ENCODE measurements at regions of chr3 and their contacts with region 1.

Region 1: DNA sequence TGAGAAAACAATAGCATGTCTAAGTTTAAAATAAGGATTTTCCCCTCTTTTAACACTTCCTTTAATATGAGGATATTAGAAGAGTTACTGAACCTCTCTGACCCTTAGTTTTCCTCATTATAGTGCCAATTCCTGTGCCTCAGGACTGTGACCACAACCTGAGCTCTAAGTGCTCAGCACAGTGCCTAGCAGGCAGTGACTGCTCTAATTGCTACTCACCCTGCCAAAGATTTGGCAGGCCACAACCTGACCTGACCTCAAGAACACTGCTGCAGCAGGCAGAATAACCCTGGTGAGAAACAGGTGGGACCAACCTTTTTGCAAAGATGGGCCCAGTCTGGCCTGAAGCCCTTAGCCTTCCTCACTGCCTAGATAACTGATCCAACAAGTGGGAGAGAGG is 35.7 kb downstream of the NBEAL2 start:
- DNase-seq: no peak
- ATAC-seq: no peak
- H3K4me3 ChIP-seq: no peak overlapping the region
- H3K27ac ChIP-seq: no peak overlapping the region
- H3K4me1 ChIP-seq: no peaks in the 10 kb centered on the region
- H3K27me3 ChIP-seq: no peaks in the 10 kb centered on the region
- CTCF ChIP-seq: no peak

Region 2: DNA sequence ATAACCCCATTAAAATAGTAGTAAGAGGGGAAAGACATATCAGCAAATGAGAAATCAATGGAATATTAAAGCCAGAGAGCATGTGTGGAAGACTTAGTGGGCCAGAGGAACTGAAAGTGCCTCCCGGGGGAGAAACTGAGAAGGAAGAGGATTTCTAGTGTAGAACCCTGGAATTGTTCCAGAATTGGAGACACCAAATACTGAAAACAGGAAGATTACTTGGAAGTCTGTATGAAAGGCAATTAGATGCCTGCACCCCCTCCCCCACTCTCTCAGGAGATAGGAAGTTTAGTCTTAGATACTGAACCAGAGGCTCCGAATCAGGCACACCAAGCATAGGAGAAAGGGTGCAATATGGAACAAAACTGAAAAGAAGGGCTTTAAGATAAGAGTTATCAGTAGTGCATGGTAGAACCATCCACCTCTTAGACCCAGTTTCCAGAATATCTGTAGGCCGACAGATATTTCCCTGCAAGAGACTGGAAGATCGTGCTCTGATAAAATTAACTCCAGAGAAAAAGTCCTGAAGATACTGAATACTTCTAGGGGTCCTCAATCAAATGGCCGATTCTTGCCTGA is 300.0 kb after region 1 on chr3:
- CTCF ChIA-PET with region 1: no interaction called
- POLR2A ChIA-PET with region 1: interaction called, 17 read pairs
- in situ Hi-C with region 1: no loop called
- intact Hi-C with region 1: no loop called
- DNase-seq: no peak
- ATAC-seq: no peak
- H3K4me3 ChIP-seq: no peak overlapping the region
- H3K27ac ChIP-seq: no peak overlapping the region
- H3K4me1 ChIP-seq: no peaks in the 10 kb centered on the region
- H3K27me3 ChIP-seq: no peaks in the 10 kb centered on the region
- CTCF ChIP-seq: no peak

Measured in Panc1 (cell line).